Activated naive CD4-positive, alpha-beta T cell treated with anti-CD3 and anti-CD28 coated beads for 36 hours (primary cell): ENCODE measurements at regions of chr6 and their contacts with region 1.

Region 1: DNA sequence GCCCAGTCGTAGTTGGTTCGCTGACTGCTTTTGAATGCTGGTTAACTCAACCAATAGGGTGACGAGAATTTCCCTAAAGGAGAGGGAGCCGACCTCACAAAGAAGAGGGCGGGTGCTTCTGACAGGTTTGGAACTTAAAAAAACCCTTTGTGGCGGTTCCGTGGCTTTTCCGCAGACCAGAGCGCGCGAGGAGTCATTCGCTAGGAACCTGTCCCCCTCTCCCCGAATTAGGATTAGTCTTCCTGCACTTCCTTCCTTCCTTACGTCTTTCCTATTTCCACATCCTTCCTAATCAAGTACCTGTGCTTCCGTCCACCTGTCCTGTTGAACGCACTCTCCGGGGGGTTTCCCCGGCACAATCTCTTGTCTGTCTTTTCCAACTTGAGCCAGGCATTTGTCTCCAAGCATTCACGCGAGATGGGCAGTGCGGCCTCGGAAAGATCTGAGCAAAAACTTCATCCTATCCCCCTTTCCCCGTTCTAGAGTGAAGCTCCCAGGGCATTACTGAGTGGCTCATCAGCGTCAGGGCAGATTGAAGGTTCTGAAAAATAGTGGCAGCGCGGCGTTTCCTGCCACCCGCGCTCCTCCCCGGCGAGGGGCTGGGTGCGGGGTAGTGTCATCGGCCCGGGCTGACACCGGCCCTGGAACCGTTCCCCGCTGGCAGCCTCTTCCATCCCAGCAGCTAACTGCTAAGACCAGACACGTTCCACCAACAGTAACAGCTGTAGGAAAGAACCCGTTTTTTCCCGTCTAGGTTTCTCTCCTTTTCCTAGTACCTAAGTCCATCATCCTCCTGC is 1.5 kb upstream of the STXBP5 start:
- DNase-seq: peak; percentile 88
- H3K4me3 Mint-ChIP-seq: peak overlapping the region; percentile 83
- H3K27ac Mint-ChIP-seq: peak overlapping the region; percentile 99
- H3K4me1 Mint-ChIP-seq: peaks cover 20% of the 10 kb centered on the region
- H3K27me3 Mint-ChIP-seq: no peaks in the 10 kb centered on the region

Region 2: DNA sequence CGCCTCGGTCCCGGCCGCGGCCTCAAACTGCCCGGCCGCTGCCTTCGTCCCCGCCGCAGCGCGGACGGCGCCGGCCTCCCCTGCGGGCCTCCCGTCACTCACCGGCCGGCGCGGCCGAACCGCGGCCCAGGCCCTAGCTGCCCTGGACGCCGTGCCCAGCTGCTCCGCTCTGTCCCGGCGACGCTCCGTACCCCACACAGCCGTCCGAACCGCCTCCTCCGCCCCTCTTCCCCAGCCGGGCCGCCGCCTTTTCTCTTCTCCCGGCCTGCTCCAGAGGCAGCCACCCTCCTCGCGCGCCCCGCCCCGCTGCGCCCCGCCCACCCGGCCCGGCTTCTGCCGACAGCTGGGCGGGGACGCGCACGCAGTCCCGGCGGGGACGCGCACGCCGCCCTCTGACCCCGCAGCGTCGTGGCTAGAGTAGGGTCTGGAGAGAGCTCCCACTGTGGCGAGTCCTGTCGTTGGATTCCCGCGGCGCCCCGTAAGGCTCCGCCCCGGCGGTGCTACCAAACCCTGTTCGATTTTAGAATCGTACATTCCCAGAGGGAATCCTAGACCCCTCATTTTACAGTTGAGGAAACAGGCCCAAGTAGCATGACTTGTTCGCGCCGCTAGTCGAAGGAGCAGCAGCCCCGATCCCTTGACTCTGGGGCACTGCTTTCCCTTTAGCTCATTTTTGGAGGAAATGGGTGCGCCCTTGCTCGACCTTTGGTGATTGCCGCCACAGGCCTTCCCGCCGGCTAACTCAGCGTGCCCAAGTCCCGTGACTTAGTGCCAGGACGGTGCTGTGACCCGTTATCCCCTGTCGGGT is 1388.0 kb before region 1 on chr6 and contains the start of gene FBXO30:
- CTCF ChIA-PET with region 1: no interaction called
- intact Hi-C with region 1: loop called (anchors 2 kb)
- DNase-seq: peak; percentile 81
- H3K4me3 Mint-ChIP-seq: peak within 1 kb of the TSS; percentile 89
- H3K27ac Mint-ChIP-seq: peak within 1 kb of the TSS; percentile 84
- H3K4me1 Mint-ChIP-seq: peaks cover 31% of the 10 kb centered on the region
- H3K27me3 Mint-ChIP-seq: no peaks in the 10 kb centered on the region
- total RNA-seq, gene FBXO30: 2.0 to 2.1 TPM

Region 3: GRCh38 chr6:146857180-146857979 is 345.3 kb before region 1 on chr6:
- CTCF ChIA-PET with region 1: no interaction called
- intact Hi-C with region 1: loop called (anchors 2 kb)
- DNase-seq: peak; percentile 84
- H3K4me3 Mint-ChIP-seq: no peak overlapping the region
- H3K27ac Mint-ChIP-seq: no peak overlapping the region
- H3K4me1 Mint-ChIP-seq: peaks cover 21% of the 10 kb centered on the region
- H3K27me3 Mint-ChIP-seq: peaks cover 2% of the 10 kb centered on the region

Region 4: GRCh38 chr6:147285087-147285855 is 82.6 kb after region 1 on chr6:
- CTCF ChIA-PET with region 1: no interaction called
- intact Hi-C with region 1: loop called (anchors 1 kb)
- DNase-seq: no peak
- H3K4me3 Mint-ChIP-seq: no peak overlapping the region
- H3K27ac Mint-ChIP-seq: no peak overlapping the region
- H3K4me1 Mint-ChIP-seq: peaks cover 34% of the 10 kb centered on the region
- H3K27me3 Mint-ChIP-seq: no peaks in the 10 kb centered on the region

Region 5: DNA sequence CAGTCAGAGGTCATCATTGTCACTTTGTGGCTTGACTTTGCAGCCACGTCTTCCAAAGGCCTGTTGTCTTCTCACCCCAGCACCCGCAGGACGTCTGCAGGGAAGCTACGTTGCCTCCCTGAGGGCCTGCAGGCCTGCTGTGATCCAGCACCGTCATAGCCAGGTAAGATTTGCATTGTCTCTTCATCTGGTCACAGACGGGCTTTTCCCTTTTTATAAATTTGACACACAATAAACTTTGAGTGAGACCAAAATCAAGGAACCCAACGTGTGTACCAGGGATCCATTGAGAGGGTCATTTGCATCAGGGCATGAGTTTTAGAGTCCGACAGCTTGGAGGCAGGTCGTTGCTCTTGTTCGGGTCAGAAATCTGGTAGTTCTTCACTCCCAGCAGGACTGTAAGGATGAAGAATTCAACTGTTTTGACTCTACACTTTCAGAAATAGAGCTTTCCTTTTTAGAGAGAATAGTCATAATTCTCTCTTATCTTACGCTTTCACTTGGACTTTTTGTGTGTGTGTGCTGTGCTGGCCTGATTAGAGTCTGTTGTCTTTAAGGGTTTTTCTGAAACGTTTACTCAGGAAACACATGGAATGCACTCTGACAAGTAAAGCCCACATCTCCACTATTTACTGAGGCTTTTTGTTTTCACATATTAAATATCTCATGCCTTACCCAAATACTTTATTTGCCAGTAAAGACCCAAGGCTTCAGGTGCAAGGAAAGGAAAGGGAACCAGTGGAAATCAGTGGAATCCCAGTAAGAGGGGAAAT is 1937.6 kb after region 1 on chr6:
- CTCF ChIA-PET with region 1: no interaction called
- intact Hi-C with region 1: loop called (anchors 10 kb)
- DNase-seq: peak; percentile 87
- H3K4me3 Mint-ChIP-seq: peak overlapping the region; percentile 66
- H3K27ac Mint-ChIP-seq: peak overlapping the region; percentile 94
- H3K4me1 Mint-ChIP-seq: peaks cover 42% of the 10 kb centered on the region
- H3K27me3 Mint-ChIP-seq: no peaks in the 10 kb centered on the region